ENCODE measurements at regions of chr17 and their contacts with region 1.

Region 1: DNA sequence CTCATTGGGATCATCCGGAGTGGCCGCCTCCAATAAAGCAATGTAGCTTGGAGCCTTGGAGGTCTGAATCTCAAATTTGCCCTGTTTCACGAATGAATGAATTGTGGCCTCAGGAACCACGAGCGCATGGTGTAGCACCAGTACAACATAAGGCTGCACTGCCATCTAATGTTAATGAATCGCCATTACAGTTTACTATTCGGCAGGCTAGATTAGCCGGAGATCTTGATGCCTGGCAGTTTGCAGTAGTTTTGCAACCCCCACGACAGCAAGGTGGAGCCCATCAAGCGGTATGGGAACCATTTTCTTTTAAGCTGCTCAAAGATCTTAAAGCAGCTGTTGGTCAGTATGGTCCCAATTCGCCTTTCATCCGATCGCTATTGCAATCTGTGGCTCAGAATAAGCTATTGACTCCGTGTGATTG is 18.8 kb downstream of the ALOX15B start:
- DNase-seq: peak; percentile 45
- ATAC-seq: peak; percentile 78
- H3K4me3 ChIP-seq: no peak overlapping the region
- H3K27ac ChIP-seq: no peak overlapping the region
- H3K4me1 ChIP-seq: peaks cover 14% of the 10 kb centered on the region
- H3K27me3 ChIP-seq: peaks cover 0 to 4% of the 10 kb centered on the region in 2 experiments; a peak in 1 of 4 replicates
- CTCF ChIP-seq: peak; percentile 69 to 81 (median 74)
- EP300 ChIP-seq: no peak
- POLR2A ChIP-seq: no peak
- RAD21 ChIP-seq: peak; percentile 80

Region 2: DNA sequence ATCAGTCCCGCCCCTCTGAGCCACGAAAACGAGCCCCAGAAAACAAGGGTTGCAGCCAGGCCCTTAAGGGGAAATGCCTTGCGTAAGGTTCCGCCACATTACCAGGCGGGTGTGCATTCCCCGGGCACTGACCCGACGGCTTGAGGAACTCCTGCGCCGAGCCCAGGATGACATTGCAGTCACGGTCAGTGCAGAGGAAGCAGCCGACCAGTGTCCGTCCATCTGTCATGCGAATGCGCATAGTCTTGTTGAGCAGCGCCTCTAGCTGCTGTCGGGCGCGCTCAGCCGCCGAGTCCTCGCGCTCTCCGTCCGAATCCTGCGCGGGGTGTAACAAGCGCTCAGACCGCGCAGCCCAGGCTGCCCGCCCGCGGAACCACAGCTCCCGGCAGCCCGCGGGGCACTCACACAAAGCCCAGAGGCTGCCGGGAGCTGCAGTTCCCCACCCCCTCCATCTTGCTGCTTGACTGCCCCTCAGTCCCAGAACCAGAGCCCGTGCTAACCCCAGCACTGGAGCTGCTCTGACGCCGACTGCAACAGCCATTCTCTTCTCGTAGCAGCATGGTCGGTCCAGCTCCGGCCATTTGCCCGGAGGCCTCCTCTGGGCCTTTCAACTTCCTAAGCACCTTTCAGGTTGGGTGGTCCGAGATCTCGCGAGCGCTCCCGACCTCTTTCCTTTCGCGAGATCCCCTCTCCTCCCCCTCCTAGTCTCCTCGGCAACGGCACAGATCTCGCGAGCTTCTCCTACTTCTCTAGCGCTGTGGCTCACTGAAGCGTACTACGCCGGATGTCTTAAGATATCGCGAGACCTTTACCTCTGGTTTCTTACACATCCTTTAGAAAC is 200.6 kb before region 1 on chr17 and contains the start of gene NAA38:
- CTCF ChIA-PET with region 1: interaction called, 14 read pairs
- POLR2A ChIA-PET with region 1: no interaction called
- RAD21 ChIA-PET with region 1: interaction called, 6 read pairs
- SMC1A ChIA-PET with region 1: interaction called, 7 read pairs
- in situ Hi-C with region 1: no loop called
- intact Hi-C with region 1: loop called (anchors 2 kb)
- DNase-seq: peak; percentile 100
- ATAC-seq: peak; percentile 91
- H3K4me3 ChIP-seq: peak within 1 kb of the TSS; percentile 96
- H3K27ac ChIP-seq: peak within 1 kb of the TSS; percentile 96
- H3K4me1 ChIP-seq: peaks cover 18% of the 10 kb centered on the region
- H3K27me3 ChIP-seq: no peaks in the 10 kb centered on the region
- CTCF ChIP-seq: peak in 2 of 3 experiments; percentile 48 to 69; a peak in 5 of 6 replicates
- EP300 ChIP-seq: no peak; a peak in 1 of 4 replicates
- POLR2A ChIP-seq: peak; percentile 76
- RAD21 ChIP-seq: no peak
- polyA plus RNA-seq, gene NAA38: 206 to 231 TPM

Region 3: GRCh38 chr17:7951143-7951803 is 106.4 kb before region 1 on chr17:
- CTCF ChIA-PET with region 1: no interaction called
- POLR2A ChIA-PET with region 1: no interaction called
- RAD21 ChIA-PET with region 1: no interaction called
- SMC1A ChIA-PET with region 1: no interaction called
- in situ Hi-C with region 1: no loop called
- intact Hi-C with region 1: no loop called
- DNase-seq: peak; percentile 45
- ATAC-seq: peak; percentile 99
- H3K4me3 ChIP-seq: no peak overlapping the region
- H3K27ac ChIP-seq: peak overlapping the region; percentile 41
- H3K4me1 ChIP-seq: peaks cover 12% of the 10 kb centered on the region
- H3K27me3 ChIP-seq: no peaks in the 10 kb centered on the region
- CTCF ChIP-seq: no peak
- EP300 ChIP-seq: no peak
- POLR2A ChIP-seq: peak; percentile 49
- RAD21 ChIP-seq: no peak

Region 4: GRCh38 chr17:7989781-7990655 is 67.7 kb before region 1 on chr17:
- CTCF ChIA-PET with region 1: interaction called, 42 read pairs
- POLR2A ChIA-PET with region 1: no interaction called
- RAD21 ChIA-PET with region 1: interaction called, 19 read pairs
- SMC1A ChIA-PET with region 1: interaction called, 23 read pairs
- in situ Hi-C with region 1: no loop called
- intact Hi-C with region 1: loop called (anchors 2 kb)
- DNase-seq: peak; percentile 49
- ATAC-seq: peak; percentile 94
- H3K4me3 ChIP-seq: peak overlapping the region; percentile 63; the same call in 1 of the 2 replicates
- H3K27ac ChIP-seq: no peak overlapping the region
- H3K4me1 ChIP-seq: peaks cover 5% of the 10 kb centered on the region
- H3K27me3 ChIP-seq: 0 out of 4 replicates have a peak, but pooled peaks cover 0 to 2% of the 10 kb centered on the region in 2 experiments
- CTCF ChIP-seq: peak; percentile 93 to 98 (median 94)
- EP300 ChIP-seq: no peak
- POLR2A ChIP-seq: peak; percentile 74
- RAD21 ChIP-seq: peak; percentile 68

Region 5: DNA sequence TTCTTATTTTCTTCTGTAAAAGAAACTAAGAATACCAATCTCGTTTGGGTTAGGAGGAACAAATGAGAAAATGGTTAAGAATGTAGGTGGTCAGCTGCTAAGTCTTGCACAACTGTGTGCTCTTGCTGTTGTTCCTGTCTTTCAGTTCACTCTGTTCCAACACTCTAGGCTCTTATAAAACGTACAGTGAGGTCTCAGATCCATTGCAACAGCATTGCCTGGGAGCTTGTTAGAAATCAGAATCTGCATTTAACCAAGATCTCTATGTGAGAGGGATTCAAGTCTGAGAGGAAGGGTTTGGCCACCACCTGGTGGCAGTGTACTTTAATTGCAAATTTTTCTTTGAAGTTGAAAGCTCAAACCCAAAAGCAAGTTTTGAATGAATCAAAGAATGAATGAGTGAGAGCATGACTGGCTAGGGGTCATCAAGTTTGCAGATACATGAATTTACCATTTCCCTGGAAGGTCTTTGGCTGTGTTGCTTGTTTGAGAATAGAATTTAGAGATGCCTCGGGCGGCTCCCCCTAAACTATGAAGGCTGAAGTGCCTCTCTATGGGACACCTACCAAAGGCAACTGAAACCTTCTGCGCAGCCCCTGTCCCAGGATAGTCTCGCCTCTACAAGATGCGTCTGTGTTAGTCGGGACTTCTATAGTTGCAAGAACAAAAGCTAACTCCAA is 16.3 kb before region 1 on chr17:
- CTCF ChIA-PET with region 1: interaction called, 79 read pairs
- POLR2A ChIA-PET with region 1: interaction called, 3 read pairs
- RAD21 ChIA-PET with region 1: interaction called, 21 read pairs
- SMC1A ChIA-PET with region 1: interaction called, 31 read pairs
- in situ Hi-C with region 1: no loop called
- intact Hi-C with region 1: no loop called
- DNase-seq: no peak
- ATAC-seq: peak; percentile 80
- H3K4me3 ChIP-seq: no peak overlapping the region
- H3K27ac ChIP-seq: no peak overlapping the region
- H3K4me1 ChIP-seq: no peaks in the 10 kb centered on the region
- H3K27me3 ChIP-seq: peaks cover 0 to 3% of the 10 kb centered on the region in 2 experiments; a peak in 2 of 4 replicates
- CTCF ChIP-seq: peak; percentile 54 to 79 (median 67); a peak in 5 of 6 replicates
- EP300 ChIP-seq: no peak
- POLR2A ChIP-seq: no peak
- RAD21 ChIP-seq: peak; percentile 78

Region 6: DNA sequence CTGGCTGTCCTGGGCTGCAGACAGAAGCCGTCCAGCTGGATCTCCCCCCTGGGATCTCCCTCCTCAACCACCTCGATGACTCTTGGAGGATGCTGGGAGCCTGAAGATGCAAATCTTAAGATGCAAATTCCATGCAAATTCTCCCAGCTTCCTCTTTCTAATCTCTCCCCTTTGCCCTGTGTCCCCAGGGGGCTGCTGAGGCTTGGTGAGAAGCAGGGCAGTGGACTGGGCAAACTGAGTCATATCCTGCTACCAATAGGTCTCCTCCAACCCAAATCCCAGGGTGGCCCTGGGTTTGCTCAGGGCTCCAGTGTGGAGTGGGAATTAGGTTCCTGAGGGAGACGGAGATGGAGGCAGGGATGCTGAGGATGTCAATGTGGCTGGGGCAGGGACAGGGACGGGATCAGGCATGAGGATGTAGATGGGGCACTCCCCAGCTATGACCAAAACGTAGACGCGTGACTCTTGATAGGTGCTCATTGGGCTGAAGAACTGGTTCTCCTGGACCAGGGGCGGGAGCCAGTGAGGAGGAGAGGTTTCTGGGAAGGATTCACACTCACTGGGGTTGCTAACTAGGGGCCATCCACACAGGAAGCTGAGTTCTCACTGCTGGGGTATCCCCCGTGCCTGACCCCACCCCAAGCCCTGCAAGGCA is 33.5 kb after region 1 on chr17:
- CTCF ChIA-PET with region 1: interaction called, 95 read pairs
- POLR2A ChIA-PET with region 1: no interaction called
- RAD21 ChIA-PET with region 1: no interaction called
- SMC1A ChIA-PET with region 1: interaction called, 6 read pairs
- in situ Hi-C with region 1: no loop called
- intact Hi-C with region 1: no loop called
- DNase-seq: peak; percentile 61
- ATAC-seq: peak; percentile 90
- H3K4me3 ChIP-seq: no peak overlapping the region
- H3K27ac ChIP-seq: no peak overlapping the region
- H3K4me1 ChIP-seq: peaks cover 8% of the 10 kb centered on the region
- H3K27me3 ChIP-seq: peaks cover 0 to 4% of the 10 kb centered on the region in 2 experiments; a peak in 1 of 4 replicates
- CTCF ChIP-seq: no peak
- EP300 ChIP-seq: 0 out of 4 replicates have a peak, but pooled peaks of 1 of the 2 experiments have one; percentile 21
- POLR2A ChIP-seq: no peak
- RAD21 ChIP-seq: no peak

Region 7: DNA sequence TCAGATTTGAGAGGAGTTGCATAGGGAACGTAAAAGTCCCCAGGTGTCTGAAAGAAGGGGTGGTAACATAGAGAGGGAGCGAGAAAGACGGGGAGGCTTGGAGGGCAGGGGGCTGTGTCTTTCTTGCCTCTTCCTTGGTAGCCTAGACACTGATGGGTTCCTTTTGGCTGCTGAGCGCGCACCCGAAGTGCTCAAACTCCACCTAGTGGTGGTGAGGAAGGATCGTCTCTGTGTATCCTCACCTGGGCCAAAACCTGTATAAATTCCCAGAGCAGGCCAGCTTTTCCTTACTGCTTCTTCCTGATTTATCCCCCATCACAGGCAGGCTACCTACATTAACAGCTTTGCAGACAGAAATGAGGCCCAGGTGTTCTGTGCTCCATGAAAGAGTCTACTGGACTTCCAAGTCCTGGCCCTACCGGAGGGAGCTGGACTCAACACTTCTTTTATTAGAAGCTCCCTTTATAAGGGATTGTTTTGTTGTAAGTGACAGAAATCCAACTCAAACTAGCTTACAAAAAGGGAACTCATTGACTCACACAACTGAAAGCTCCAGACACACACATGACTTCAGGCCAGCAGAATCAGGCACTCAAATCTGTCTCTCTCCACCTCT is 243.0 kb after region 1 on chr17:
- CTCF ChIA-PET with region 1: interaction called, 21 read pairs
- POLR2A ChIA-PET with region 1: no interaction called
- RAD21 ChIA-PET with region 1: interaction called, 9 read pairs
- SMC1A ChIA-PET with region 1: interaction called, 4 read pairs
- in situ Hi-C with region 1: no loop called
- intact Hi-C with region 1: no loop called
- DNase-seq: peak; percentile 31
- ATAC-seq: peak; percentile 98
- H3K4me3 ChIP-seq: no peak overlapping the region
- H3K27ac ChIP-seq: no peak overlapping the region
- H3K4me1 ChIP-seq: no peaks in the 10 kb centered on the region
- H3K27me3 ChIP-seq: no peaks in the 10 kb centered on the region
- CTCF ChIP-seq: peak; percentile 86 to 96 (median 90); a peak in 5 of 6 replicates
- EP300 ChIP-seq: no peak
- POLR2A ChIP-seq: no peak
- RAD21 ChIP-seq: peak; percentile 90

Measured in GM12878 (cell line).